ENCODE measurements at regions of chr2 and their contacts with region 1.

Region 1: DNA sequence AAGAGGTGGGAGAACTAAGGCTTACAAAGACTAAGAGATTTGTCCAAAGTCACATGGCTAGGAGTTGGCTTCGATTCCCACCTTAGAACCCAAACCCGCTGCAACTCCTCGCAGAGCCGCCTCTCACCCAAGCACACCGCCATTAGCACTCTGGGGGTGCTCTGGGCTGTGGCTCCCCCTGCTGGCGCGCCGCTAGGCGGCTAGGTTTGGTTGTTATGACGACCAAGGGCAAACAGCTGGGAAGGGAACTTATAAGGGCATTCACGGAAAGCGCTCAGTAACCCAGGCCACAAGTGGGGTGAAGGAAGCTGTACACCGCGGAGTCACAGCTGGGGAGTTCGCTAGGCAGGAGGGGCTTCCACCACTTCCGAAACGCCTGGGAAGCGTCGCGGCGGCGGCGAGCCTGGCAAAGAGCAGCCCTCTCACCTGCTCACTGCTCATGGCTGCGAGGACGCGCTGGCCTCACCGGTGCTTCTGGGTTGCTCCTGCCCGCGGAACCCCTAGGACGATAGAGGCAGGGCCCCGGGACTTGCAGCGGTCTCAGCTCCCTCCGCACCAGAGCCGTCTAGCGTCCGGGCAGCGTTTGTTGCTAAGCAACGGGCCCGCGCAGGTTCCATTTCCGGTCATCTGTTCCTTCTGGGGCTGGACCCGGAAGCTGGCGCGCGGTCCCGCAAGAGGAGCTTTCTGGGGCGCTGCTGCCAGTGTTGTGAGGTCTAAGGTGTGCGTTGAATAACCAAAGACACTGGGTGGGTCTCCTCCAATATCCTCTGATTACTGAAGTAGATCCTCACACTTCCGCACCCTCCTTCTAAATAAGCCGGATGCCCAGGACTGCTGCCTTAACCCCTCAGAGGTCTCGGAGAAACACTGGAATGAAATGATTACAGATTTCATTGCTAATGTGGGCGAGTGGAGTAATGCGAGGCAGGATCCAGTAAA is at the start of gene DNAH7:
- DNase-seq: peak; percentile 79 to 86 (median 84)
- ATAC-seq: peak; percentile 97
- H3K4me3 ChIP-seq: peak within 1 kb of the TSS; percentile 78
- H3K27ac ChIP-seq: peak within 1 kb of the TSS; percentile 71
- H3K4me1 ChIP-seq: peaks cover 2 to 8% of the 10 kb centered on the region in 2 experiments; a peak in 3 of 5 replicates
- H3K27me3 ChIP-seq: no peaks in the 10 kb centered on the region
- CTCF ChIP-seq: peak; percentile 76 to 79 (median 77)
- EP300 ChIP-seq: no peak
- POLR2A ChIP-seq: no peak; the same call in 1 of the 2 replicates
- RAD21 ChIP-seq: peak; percentile 62 to 68
- polyA plus RNA-seq, gene DNAH7: 0.03 to 0.14 TPM

Region 2: DNA sequence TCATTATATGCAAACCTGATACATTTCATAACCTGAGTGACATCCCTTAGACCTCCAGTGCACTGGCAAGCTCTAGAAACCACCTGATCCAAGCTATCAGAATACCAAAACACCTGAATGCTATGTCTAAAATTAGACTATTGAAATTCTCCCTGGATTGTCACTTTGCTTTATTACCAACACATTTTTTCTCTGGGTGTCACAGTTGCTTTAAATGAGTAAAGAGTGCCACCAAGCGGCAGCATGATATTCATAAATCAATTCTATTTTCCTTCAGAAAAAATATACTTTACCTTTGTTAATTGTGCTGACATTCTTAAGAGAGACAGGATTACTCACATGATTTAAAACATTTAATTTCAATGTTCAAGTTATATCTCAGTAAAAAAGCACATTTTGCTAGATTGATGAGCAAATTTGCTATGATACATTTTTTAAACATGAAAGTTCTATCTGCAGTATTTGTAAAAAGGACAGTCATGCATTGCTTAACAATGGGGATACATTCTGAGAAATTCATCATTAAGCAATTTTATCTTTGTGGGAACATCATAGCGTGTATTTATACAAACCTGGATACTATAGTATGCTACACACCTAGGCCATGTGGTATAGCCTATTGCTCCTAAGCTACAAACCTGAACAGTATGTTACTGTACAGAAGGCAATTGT is 750.0 kb before region 1 on chr2:
- CTCF ChIA-PET with region 1: no interaction called
- POLR2A ChIA-PET with region 1: no interaction called
- in situ Hi-C with region 1: no loop called
- intact Hi-C with region 1: loop called (anchors 5 kb)
- DNase-seq: peak; percentile 7 to 68 (median 20)
- ATAC-seq: peak; percentile 69
- H3K4me3 ChIP-seq: no peak overlapping the region
- H3K27ac ChIP-seq: no peak overlapping the region
- H3K4me1 ChIP-seq: no peaks in the 10 kb centered on the region; a peak in 2 of 5 replicates
- H3K27me3 ChIP-seq: no peaks in the 10 kb centered on the region
- CTCF ChIP-seq: peak; percentile 33 to 72 (median 34); a peak in 4 of 6 replicates
- EP300 ChIP-seq: no peak
- POLR2A ChIP-seq: no peak
- RAD21 ChIP-seq: peak; percentile 78 to 79

Region 3: GRCh38 chr2:195533771-195534642 is 534.5 kb before region 1 on chr2:
- CTCF ChIA-PET with region 1: no interaction called
- POLR2A ChIA-PET with region 1: no interaction called
- in situ Hi-C with region 1: no loop called
- intact Hi-C with region 1: loop called (anchors 10 kb)
- DNase-seq: peak in 2 of 4 experiments; percentile 21 to 67
- ATAC-seq: peak; percentile 61
- H3K4me3 ChIP-seq: no peak overlapping the region
- H3K27ac ChIP-seq: peak overlapping the region; percentile 58; the same call in 2 of the 3 replicates
- H3K4me1 ChIP-seq: peaks cover 10 to 57% of the 10 kb centered on the region in 2 experiments
- H3K27me3 ChIP-seq: no peaks in the 10 kb centered on the region
- CTCF ChIP-seq: peak in 2 of 3 experiments; percentile 15 to 19; a peak in 1 of 6 replicates
- EP300 ChIP-seq: no peak
- POLR2A ChIP-seq: no peak
- RAD21 ChIP-seq: no peak

Region 4: DNA sequence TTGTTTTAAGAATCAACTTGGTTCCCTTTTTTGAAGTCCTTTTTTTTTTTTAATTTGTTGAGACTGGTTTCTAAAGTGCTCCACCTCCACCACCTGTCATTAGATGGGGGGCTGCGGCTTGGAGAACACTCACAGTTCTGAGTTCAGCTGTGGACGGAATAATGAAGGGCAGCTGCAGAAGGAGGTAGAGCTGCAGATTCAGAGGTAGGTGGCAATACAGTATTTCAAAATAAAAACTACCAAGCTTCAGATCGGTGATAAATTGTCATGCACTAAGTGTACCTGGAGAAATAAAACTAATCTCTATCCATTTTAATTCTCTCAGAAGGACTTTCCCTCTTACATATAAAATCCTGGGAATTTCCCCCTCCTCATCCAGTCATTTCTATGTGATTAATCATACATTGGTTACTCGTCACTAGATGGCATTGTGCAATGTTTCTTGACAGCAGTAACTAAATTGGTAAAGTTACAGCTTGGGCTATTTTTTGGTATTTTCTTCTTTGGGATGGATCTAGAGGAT is 492.6 kb before region 1 on chr2:
- CTCF ChIA-PET with region 1: no interaction called
- POLR2A ChIA-PET with region 1: no interaction called
- in situ Hi-C with region 1: no loop called
- intact Hi-C with region 1: loop called (anchors 5 kb)
- DNase-seq: peak in 1 of 4 experiments; percentile 32
- ATAC-seq: no peak; the same call in 2 of the 3 replicates
- H3K4me3 ChIP-seq: no peak overlapping the region
- H3K27ac ChIP-seq: no peak overlapping the region
- H3K4me1 ChIP-seq: peaks cover 0 to 14% of the 10 kb centered on the region in 2 experiments; a peak in 3 of 5 replicates
- H3K27me3 ChIP-seq: no peaks in the 10 kb centered on the region
- CTCF ChIP-seq: peak in 1 of 3 experiments; percentile 47; a peak in 2 of 6 replicates
- EP300 ChIP-seq: no peak
- POLR2A ChIP-seq: no peak
- RAD21 ChIP-seq: peak; percentile 38 to 71

Region 5: DNA sequence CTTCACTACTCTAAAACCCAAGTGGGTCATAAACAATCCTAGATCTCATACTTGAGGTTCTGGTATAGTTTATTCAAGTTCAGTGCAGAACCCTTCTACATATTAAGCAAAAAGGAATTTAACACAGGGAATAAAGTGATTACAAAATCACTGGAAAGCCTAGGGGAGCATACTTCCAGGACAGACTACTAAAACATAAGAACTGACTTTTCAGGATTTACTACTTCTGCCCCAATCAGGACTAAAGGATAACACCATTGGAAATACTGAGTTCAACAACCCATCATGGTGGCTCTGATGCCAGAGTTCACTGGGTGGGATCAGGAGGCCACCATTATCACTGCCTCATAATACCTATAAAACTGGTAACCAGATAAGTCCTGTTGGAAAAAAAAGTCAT is 123.5 kb before region 1 on chr2:
- CTCF ChIA-PET with region 1: no interaction called
- POLR2A ChIA-PET with region 1: no interaction called
- in situ Hi-C with region 1: no loop called
- intact Hi-C with region 1: loop called (anchors 5 kb)
- DNase-seq: no peak
- ATAC-seq: no peak
- H3K4me3 ChIP-seq: no peak overlapping the region
- H3K27ac ChIP-seq: no peak overlapping the region
- H3K4me1 ChIP-seq: no peaks in the 10 kb centered on the region
- H3K27me3 ChIP-seq: no peaks in the 10 kb centered on the region
- CTCF ChIP-seq: no peak
- EP300 ChIP-seq: no peak
- POLR2A ChIP-seq: no peak
- RAD21 ChIP-seq: no peak

Region 6: DNA sequence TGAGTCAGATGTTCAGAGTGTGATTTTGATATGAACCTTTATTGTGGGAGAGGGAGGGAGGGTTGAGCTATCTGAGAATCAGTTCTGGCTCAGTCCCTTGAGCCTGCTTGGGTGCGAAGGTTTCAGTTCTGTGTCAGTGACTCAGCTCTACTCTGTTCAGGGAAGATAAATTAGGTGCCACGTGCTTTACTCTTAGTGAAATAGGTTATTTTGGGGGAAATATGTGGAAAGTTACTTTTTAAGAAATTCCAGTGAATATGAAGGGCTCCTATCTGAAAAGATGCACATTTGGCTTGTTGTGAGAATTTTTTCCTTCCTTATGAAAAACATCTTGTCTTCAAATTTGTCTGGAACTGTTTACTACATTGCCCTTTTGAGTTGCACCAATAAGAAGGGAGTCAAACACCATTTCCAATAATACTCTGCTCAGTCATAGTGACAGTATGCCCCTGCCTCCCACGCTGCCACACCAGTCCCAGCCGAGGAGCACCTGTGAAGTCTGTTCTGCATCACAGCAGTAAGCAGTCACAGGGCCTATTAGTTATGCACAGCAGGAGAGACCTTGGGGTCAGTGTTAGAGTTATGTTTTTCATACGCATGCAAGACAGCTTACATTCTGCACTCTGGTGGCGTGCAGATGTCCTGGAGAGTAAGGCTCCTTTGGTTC is 32.9 kb after region 1 on chr2:
- CTCF ChIA-PET with region 1: no interaction called
- POLR2A ChIA-PET with region 1: no interaction called
- in situ Hi-C with region 1: no loop called
- intact Hi-C with region 1: loop called (anchors 1 kb)
- DNase-seq: peak; percentile 21 to 78 (median 46)
- ATAC-seq: peak; percentile 92
- H3K4me3 ChIP-seq: no peak overlapping the region
- H3K27ac ChIP-seq: peak overlapping the region; percentile 47
- H3K4me1 ChIP-seq: peaks cover 0 to 22% of the 10 kb centered on the region in 2 experiments; a peak in 4 of 5 replicates
- H3K27me3 ChIP-seq: no peaks in the 10 kb centered on the region
- CTCF ChIP-seq: no peak
- EP300 ChIP-seq: peak; percentile 76
- POLR2A ChIP-seq: no peak
- RAD21 ChIP-seq: no peak

Region 7: DNA sequence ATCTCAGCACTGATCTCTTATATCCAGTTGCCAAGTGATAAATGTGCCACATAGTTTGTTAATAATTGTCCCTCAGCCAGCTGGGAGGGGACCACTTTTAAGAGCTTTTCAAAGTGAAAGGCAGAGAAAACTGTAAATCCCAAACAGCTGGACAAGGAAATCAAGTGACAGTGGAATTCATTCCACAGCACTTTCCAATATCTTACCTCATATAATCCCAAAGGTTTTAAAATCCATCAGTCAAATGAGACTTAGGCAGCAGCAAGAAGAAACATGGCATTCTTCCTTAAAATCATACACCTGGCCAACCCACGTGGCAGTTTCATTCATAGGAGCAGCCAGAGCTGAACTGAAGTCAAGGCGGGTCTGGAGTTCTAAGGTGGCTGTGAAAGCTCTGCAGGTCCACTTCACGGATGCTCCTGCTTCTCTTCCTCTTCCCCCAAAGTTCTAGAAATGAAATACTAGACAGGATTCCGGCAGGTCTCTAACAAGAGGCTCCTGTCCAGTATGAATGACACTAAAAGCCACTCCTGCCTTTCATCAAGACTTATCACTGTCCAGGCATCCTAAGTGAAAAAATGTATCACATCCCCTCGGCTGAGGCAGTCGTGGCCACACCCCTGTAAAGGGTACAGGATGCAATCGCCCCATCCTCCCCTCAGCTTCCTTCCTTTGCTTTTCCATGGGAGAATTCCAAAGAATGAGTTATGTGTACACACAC is 293.2 kb after region 1 on chr2:
- CTCF ChIA-PET with region 1: no interaction called
- POLR2A ChIA-PET with region 1: no interaction called
- in situ Hi-C with region 1: no loop called
- intact Hi-C with region 1: no loop called
- DNase-seq: peak in 2 of 4 experiments; percentile 12 to 25
- ATAC-seq: peak; percentile 73
- H3K4me3 ChIP-seq: peak overlapping the region; percentile 7; the same call in 1 of the 2 replicates
- H3K27ac ChIP-seq: no peak overlapping the region
- H3K4me1 ChIP-seq: peaks cover 0 to 5% of the 10 kb centered on the region in 2 experiments; a peak in 1 of 5 replicates
- H3K27me3 ChIP-seq: no peaks in the 10 kb centered on the region
- CTCF ChIP-seq: no peak
- EP300 ChIP-seq: no peak
- POLR2A ChIP-seq: no peak
- RAD21 ChIP-seq: no peak

Measured in K562 (cell line).